Breast epithelium (tissue), 4 donors: ENCODE measurements at regions of chr13 and their contacts with region 1.

Region 1: GRCh38 chr13:49792550-49793324 is at the start of gene KPNA3:
- DNase-seq: peak; percentile 90 to 93
- H3K4me3 ChIP-seq: peak within 1 kb of the TSS; percentile 81 to 97 (median 89)
- H3K27ac ChIP-seq: peak within 1 kb of the TSS; percentile 92 to 99
- H3K4me1 ChIP-seq: peaks cover 0 to 6% of the 10 kb centered on the region in 2 donors
- H3K27me3 ChIP-seq: no peaks in the 10 kb centered on the region
- CTCF ChIP-seq: no peak
- POLR2A ChIP-seq: no peak
- total RNA-seq, gene KPNA3: 25.6 to 35.5 (median 25.8) TPM

Region 2: DNA sequence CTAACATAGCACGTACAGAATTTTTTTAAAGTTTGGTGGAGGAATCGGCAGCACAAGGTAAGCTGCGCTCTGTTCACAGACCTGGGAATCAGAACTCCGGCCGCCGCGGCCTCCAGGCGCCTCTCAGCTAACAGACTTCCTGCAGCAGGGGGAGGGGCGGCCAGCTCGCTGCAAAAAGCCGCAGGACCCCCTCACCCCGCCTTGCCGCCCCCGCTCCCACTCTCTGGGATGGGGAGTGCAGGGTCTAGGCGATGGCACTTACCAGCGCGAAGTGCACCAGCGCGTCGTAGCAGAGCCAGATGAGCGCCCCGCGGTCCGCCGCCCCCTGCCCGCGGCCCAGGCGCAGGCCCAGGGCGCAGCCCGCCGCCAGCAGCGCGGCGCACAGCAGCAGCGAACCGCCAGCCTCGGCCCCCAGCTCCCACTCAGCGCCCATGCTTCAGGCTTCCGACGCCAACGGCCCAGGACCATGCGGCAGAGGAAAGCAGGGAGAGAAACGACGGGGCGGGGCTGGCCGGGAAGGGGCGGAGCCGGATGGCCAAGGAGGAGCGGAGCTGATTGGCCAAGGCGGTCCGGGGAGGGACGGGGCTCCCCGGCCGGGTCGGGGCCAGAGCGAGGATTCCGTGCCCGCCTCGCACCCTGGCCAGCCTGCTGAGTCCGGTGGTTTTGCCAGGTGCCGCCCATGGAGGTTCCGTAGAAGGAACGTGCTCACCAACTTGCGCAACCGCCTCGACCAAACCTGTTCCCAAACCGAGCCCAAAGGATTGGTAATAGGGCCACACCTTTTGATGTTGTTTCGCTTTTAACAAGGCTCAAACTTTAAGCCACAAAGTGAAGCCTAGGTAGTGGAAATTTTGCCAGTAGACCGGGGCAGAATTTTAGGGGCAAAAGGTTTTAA is 101.5 kb before region 1 on chr13 and contains the start of gene EBPL:
- intact Hi-C with region 1: loop called (anchors 10 kb)
- DNase-seq: peak; percentile 90 to 92
- H3K4me3 ChIP-seq: peak within 1 kb of the TSS; percentile 62 to 96 (median 78)
- H3K27ac ChIP-seq: peak within 1 kb of the TSS; percentile 91 to 93
- H3K4me1 ChIP-seq: no peaks in the 10 kb centered on the region
- H3K27me3 ChIP-seq: no peaks in the 10 kb centered on the region
- CTCF ChIP-seq: no peak
- POLR2A ChIP-seq: peak; percentile 17
- total RNA-seq, gene EBPL: 33.3 to 104 (median 80.1) TPM